Mammary epithelial cell (primary cell): ENCODE measurements at regions of chr14 and their contacts with region 1.

Region 1: DNA sequence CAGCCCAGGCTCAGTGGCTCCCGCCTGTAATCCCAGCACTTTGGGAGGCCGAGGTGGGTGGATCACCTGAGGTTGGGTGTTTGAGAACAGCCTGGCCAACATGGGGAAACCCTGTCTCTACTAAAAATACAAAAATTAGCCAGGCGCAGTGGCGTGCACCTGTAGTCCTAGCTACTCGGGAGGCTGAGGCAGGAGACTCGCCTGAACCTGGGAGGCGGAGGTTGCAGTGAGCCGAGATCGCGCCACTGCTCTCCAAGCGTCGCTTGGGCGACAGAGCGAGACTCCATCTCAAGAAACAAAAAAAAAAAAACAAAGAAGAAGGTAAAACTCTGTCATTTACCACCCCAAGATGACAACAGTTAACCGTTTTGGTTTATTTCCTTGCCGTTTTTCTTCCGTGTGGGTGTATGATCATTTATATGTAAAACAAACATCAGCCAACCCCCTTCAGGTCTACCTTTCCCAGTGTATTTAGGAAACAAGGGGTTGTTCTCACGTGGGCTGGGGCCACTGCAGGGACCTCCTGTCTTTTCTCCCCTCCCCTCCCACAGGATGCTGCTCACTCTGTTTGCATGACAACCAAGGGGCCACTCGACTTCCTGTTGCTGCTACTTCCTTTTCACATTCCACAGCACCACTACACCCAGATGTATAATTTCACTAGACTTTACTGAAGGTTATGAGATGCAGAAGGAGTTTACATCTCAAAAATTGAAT is 13.6 kb downstream of the TTC9 start:
- DNase-seq: no peak
- H3K4me3 ChIP-seq: no peak overlapping the region
- H3K27ac ChIP-seq: no peak overlapping the region
- H3K4me1 ChIP-seq: no peaks in the 10 kb centered on the region
- H3K27me3 ChIP-seq: no peaks in the 10 kb centered on the region
- CTCF ChIP-seq: no peak

Region 2: DNA sequence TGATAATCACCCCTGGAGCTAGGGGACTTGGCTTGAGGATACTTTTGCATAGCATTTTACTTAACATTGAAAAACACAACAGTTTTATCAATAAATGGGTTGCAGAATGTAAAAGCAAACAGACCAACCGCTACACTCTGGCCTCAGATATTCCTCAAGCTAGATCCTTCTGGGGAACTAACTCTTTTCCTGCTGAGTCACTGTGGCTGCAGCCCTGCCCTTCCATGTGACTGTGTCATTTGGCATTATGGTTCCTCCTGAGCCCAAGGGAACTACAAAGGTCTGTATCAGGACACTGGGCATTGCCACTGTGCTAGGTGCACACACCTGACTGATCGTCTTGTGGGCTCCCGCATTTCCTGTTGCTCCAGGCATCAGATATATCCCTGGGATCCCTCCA is 43.0 kb after region 1 on chr14:
- CTCF ChIA-PET with region 1: no interaction called
- dilution Hi-C with region 1: loop called (anchors 5 kb)
- in situ Hi-C with region 1: no loop called
- intact Hi-C with region 1: no loop called
- DNase-seq: peak; percentile 58
- H3K4me3 ChIP-seq: no peak overlapping the region
- H3K27ac ChIP-seq: peak overlapping the region; percentile 32
- H3K4me1 ChIP-seq: peaks cover 17% of the 10 kb centered on the region
- H3K27me3 ChIP-seq: no peaks in the 10 kb centered on the region
- CTCF ChIP-seq: no peak